CD14-positive monocyte (primary cell): ENCODE measurements at regions of chr5 and their contacts with region 1.

Region 1: GRCh38 chr5:39158127-39158593 is 61.2 kb downstream of the FYB1 start:
- DNase-seq: peak; percentile 40 to 53 (median 51)
- H3K4me3 ChIP-seq: no peak overlapping the region
- H3K4me3 Mint-ChIP-seq: no peak overlapping the region
- H3K27ac ChIP-seq: peak overlapping the region in 1 of 2 donors; percentile 71
- H3K27ac Mint-ChIP-seq: peak overlapping the region; percentile 7 to 89 (median 74)
- H3K4me1 ChIP-seq: peaks cover 8 to 42% of the 10 kb centered on the region in 2 donors
- H3K4me1 Mint-ChIP-seq: peaks cover 46% of the 10 kb centered on the region
- H3K27me3 ChIP-seq: no peaks in the 10 kb centered on the region
- H3K27me3 Mint-ChIP-seq: peaks cover 0 to 2% (median 0%) of the 10 kb centered on the region in 3 donors
- CTCF ChIP-seq: no peak

Region 2: DNA sequence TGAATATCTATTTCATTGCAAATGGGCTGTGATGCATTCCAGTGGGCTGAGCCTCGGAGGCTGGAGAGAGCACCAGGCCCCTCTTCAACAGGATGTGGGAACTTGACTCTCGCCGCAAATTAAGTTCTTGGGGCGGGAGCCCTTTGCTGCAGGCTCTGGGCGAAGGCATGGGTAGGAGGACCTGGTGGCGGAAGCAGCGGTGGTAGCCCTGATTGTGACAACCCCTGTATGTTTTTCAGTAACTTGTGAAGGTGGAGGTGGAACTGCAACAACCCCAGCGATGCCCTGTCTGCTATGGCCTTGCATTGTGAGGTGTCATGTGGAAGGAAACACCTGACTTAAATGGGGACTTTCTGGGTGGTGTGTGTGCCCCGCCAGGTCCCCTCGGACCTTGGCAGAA is 51.8 kb after region 1 on chr5:
- intact Hi-C with region 1: loop called in 1 of 2 experiments (anchors 10 kb)
- DNase-seq: no peak
- H3K4me3 ChIP-seq: peak overlapping the region in 1 of 3 experiments; percentile 24
- H3K4me3 Mint-ChIP-seq: peak overlapping the region in 1 of 2 donors; percentile 35
- H3K27ac ChIP-seq: peak overlapping the region; percentile 33 to 54
- H3K27ac Mint-ChIP-seq: peak overlapping the region in 5 of 7 donors; percentile 37 to 89 (median 62)
- H3K4me1 ChIP-seq: peaks cover 75 to 97% of the 10 kb centered on the region in 2 donors
- H3K4me1 Mint-ChIP-seq: peaks cover 99% of the 10 kb centered on the region
- H3K27me3 ChIP-seq: no peaks in the 10 kb centered on the region
- H3K27me3 Mint-ChIP-seq: no peaks in the 10 kb centered on the region
- CTCF ChIP-seq: no peak

Region 3: DNA sequence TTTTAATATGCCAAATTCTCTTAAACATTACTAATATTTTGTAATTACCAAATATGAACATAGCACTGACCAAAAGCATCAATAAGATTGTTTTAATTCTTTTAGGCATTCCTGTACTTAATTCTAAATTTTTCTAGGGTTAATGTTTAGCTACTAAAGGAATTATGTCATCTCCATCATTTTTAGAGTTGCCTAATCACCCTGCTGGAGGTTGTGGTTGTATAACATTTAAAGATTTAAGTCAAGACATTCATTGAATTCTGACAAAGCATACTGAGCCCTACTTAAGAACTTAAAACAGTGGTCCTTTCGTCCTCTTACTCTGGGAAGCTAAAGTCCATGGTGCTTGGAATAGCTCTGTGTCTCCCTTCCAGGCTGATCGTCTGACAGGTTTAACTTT is 294.7 kb after region 1 on chr5:
- intact Hi-C with region 1: no loop called
- DNase-seq: no peak
- H3K4me3 ChIP-seq: no peak overlapping the region
- H3K4me3 Mint-ChIP-seq: no peak overlapping the region
- H3K27ac ChIP-seq: no peak overlapping the region
- H3K27ac Mint-ChIP-seq: no peak overlapping the region
- H3K4me1 ChIP-seq: peaks cover 14 to 15% of the 10 kb centered on the region in 2 donors
- H3K4me1 Mint-ChIP-seq: peaks cover 19% of the 10 kb centered on the region
- H3K27me3 ChIP-seq: no peaks in the 10 kb centered on the region
- H3K27me3 Mint-ChIP-seq: peaks cover 0 to 2% (median 2%) of the 10 kb centered on the region in 3 donors
- CTCF ChIP-seq: no peak